Ovary (tissue), 10 donors: ENCODE measurements at regions of chr3 and their contacts with region 1.

Region 1: GRCh38 chr3:23116081-23116837 is 86.9 kb upstream of the UBE2E2 start:
- DNase-seq: no peak
- H3K4me3 ChIP-seq: no peak overlapping the region
- H3K27ac ChIP-seq: no peak overlapping the region
- H3K4me1 ChIP-seq: peaks cover 3% of the 10 kb centered on the region
- H3K27me3 ChIP-seq: no peaks in the 10 kb centered on the region
- CTCF ChIP-seq: no peak
- EP300 ChIP-seq: no peak
- POLR2A ChIP-seq: no peak

Region 2: GRCh38 chr3:23071758-23072157 is 44.5 kb before region 1 on chr3:
- intact Hi-C with region 1: loop called in 1 of 4 experiments (anchors 1 kb)
- DNase-seq: no peak
- H3K4me3 ChIP-seq: no peak overlapping the region
- H3K27ac ChIP-seq: no peak overlapping the region
- H3K4me1 ChIP-seq: no peaks in the 10 kb centered on the region
- H3K27me3 ChIP-seq: no peaks in the 10 kb centered on the region
- CTCF ChIP-seq: no peak
- EP300 ChIP-seq: no peak
- POLR2A ChIP-seq: no peak